Adrenal gland (tissue), 19 donors: ENCODE measurements at regions of chr1 and their contacts with region 1.

Region 1: GRCh38 chr1:27556781-27557595 is 47.0 kb downstream of the AHDC1 start:
- DNase-seq: peak; percentile 94 to 99 (median 99)
- H3K4me3 ChIP-seq: peak overlapping the region in 1 of 4 donors; percentile 28
- H3K27ac ChIP-seq: peak overlapping the region; percentile 11 to 96 (median 82)
- H3K4me1 ChIP-seq: peaks cover 47 to 61% of the 10 kb centered on the region in 2 donors
- H3K27me3 ChIP-seq: no peaks in the 10 kb centered on the region
- CTCF ChIP-seq: peak; percentile 90 to 95 (median 93)
- POLR2A ChIP-seq: peak in 1 of 2 donors; percentile 65

Region 2: DNA sequence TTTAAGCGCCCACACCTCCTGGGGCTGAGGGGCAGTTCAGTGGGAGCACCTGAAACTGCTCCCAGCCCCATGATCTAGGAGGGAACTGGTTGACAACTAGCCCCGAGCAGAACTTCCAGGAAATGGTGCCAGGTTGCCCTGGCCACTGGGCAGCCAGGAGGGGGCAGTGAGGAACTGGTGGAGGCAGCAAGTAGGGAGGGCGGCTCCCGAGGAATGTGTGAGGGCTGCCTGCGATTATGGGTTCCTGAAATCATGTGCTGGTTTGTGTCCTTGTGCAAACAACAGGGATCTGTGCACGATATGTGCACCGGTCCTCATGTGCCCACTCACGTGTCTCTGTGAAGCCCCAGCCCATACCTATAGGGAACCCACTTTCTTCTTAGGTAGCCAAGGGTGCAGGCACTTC is 154.6 kb before region 1 on chr1:
- intact Hi-C with region 1: loop called in 1 of 2 experiments (anchors 10 kb)
- DNase-seq: peak; percentile 79 to 92 (median 91)
- H3K4me3 ChIP-seq: no peak overlapping the region
- H3K27ac ChIP-seq: peak overlapping the region in 4 of 5 donors; percentile 52 to 88 (median 75)
- H3K4me1 ChIP-seq: peaks cover 27 to 59% of the 10 kb centered on the region in 2 donors
- H3K27me3 ChIP-seq: no peaks in the 10 kb centered on the region
- CTCF ChIP-seq: peak; percentile 38 to 85 (median 70)
- POLR2A ChIP-seq: peak in 1 of 2 donors; percentile 16